ENCODE measurements at regions of chr22 and their contacts with region 1.

Region 1: DNA sequence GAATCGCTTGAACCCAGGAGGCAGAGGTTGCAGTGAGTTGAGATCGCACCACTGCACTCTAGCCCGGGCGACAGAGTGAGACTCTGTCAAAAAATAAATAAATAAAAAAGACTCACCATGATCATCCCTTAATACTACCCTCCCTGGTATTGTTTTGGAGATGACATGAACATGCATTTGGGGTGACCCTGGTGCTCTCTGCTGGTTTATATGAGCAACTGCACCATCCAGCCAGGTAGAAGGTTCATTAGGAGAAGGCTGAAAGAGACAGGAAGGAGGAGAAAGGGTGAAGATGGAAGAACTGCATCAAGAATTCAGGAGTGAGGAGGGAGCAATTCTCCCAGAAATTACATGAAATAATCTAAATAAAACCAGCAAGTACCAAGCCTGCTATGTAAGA is 37.8 kb downstream of the SLC5A1 start:
- DNase-seq: no peak
- ATAC-seq: peak; percentile 71 to 80 (median 76)
- H3K4me3 ChIP-seq: no peak overlapping the region
- H3K27ac ChIP-seq: no peak overlapping the region
- H3K4me1 ChIP-seq: peaks cover 0 to 25% (median 0%) of the 10 kb centered on the region in 4 donors
- H3K27me3 ChIP-seq: no peaks in the 10 kb centered on the region
- CTCF ChIP-seq: peak; percentile 62 to 77 (median 68)
- POLR2A ChIP-seq: no peak

Region 2: DNA sequence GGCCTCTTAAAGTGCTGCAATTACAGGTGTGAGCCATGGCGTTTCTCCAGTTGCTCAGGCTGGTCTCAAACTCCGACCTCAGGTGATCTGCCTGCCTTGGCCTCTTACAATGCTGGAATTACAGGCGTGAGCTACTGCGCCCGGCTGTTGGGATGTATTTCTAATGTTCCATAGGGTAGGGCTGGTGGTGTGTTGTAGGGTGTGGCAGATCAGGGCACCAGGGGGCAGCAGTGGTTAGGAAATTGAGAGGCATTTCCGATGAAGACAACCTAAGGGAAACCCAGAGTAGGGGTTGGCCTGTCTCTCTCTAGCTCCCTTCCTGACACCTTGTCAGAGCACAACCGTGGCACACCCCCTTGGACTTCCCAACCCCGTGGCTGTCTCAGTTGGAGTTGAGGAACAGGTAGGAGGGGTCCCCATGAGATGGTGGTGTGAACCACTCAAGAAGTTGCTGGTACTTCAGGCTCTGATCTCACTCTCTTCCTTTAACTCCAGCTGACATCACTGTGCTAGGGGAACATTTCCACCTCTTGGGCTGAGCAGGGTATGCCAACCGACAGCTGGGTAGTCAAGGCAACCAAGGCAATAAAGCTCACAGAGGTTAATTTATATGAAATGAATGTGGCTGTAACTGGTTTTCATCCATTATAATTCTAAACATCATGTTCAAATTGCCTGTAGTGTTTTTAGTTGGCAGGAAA is 103.6 kb before region 1 on chr22:
- intact Hi-C with region 1: loop called (anchors 5 kb)
- DNase-seq: peak; percentile 76 to 79 (median 78)
- ATAC-seq: peak; percentile 70 to 78 (median 74)
- H3K4me3 ChIP-seq: no peak overlapping the region
- H3K27ac ChIP-seq: no peak overlapping the region
- H3K4me1 ChIP-seq: peaks cover 0 to 11% (median 0%) of the 10 kb centered on the region in 4 donors
- H3K27me3 ChIP-seq: no peaks in the 10 kb centered on the region
- CTCF ChIP-seq: peak; percentile 64 to 74 (median 71)
- POLR2A ChIP-seq: no peak

Region 3: GRCh38 chr22:32175683-32176644 is 95.1 kb after region 1 on chr22:
- intact Hi-C with region 1: no loop called
- DNase-seq: no peak
- ATAC-seq: peak in 1 of 4 donors; percentile 22
- H3K4me3 ChIP-seq: no peak overlapping the region
- H3K27ac ChIP-seq: no peak overlapping the region
- H3K4me1 ChIP-seq: no peaks in the 10 kb centered on the region
- H3K27me3 ChIP-seq: peaks cover 0 to 10% of the 10 kb centered on the region in 2 donors
- CTCF ChIP-seq: no peak
- POLR2A ChIP-seq: no peak

Measured in right lobe of liver (tissue), 6 donors.